ENCODE measurements at regions of chr7 and their contacts with region 1.

Region 1: GRCh38 chr7:30284298-30285066 is at the start of gene ZNRF2:
- DNase-seq: peak; percentile 100
- total RNA-seq, gene ZNRF2: 11.7 TPM

Region 2: DNA sequence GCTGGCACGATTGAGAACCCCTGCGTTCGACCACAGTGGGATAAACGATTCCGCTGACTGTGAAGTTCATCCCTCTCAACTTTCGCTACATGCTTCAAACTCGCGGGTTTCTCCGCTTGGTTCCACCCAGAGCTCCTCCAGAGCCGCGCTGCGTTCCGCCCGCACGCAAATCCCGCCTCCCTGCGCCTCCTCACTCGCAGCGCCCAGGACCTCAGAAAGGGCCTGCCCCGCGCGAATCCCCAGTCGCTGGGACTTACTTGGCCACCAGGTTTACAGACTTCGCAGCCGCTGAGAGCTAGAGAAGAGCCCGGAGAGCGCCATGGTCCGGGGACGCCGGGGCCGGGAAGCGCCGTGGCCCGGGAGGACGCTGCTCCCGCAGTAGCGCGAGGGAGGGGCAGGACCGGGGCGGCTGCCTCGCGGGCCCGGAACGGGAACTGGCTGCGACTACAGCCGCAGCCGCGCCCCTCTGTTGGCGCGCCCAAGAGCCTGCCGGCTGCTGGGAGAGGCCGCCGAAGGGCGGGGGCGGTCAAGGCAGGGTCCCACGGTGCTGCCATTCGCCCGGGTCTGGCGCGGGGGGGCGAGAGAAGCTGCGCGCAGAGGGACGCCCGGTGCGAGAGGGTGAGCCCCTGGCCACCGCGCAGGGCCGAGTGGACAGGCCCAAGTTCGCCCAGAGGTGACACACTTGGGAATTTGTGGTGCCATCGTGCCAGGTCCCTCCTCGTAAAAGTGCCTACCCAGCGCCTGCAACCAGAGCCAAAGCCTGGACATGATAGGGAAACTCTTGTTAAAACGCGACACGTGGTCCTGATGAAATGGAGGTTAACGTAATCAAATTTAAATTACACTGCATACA is 194.1 kb after region 1 on chr7 and contains the start of gene NOD1:
- intact Hi-C with region 1: loop called (anchors 5 kb)
- DNase-seq: peak; percentile 94
- total RNA-seq, gene NOD1: 13.2 TPM

Measured in cardiac septum (tissue), 1 donor.